ENCODE measurements at regions of chrX and their contacts with region 1.

Region 1: DNA sequence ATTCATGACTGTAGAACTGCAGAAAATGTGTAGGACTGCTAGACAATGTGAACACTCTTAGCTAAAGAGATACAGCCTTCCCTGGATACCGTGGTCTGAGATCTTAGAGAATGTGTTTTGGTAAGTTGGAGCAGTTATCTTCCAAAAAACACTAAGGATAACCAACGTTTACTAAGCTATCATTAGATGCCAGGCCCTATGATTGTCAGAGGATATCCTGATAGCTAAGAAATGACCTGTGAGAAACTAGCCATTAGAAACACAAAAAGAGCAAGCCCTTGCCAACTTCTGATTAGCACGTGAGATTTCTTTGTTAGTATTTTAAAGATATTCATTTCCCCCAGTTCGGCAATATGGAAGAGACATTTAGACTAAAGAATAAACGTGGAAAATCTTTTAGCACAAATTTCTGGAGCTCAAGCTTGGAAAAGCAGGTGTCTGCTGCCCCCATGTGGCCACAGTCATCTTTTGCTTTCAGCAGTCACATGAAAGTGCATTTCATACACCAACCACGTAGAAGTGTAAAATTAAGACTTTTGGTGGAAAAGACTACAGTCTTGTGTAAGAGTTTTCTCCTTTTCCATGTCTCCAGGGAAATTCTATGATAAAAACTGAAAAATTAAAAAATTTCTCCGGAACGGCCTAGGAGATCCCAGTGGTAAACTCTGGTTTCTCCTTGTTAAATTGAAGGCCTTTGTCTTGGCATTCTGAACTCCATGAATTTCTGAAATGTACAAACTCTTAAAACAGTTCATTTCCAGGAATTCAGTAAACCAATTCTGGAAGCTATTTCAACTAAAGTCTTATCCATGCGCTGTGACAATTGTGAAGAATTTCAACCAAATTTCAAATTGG is 136.4 kb downstream of the ZNF674 start:
- DNase-seq: peak; percentile 41 to 65 (median 53)
- ATAC-seq: peak; percentile 55; the same call in 1 of the 3 replicates
- H3K4me3 ChIP-seq: no peak overlapping the region
- H3K27ac ChIP-seq: no peak overlapping the region
- H3K4me1 ChIP-seq: no peaks in the 10 kb centered on the region
- H3K27me3 ChIP-seq: no peaks in the 10 kb centered on the region
- CTCF ChIP-seq: peak; percentile 62 to 76 (median 66)
- EP300 ChIP-seq: no peak
- POLR2A ChIP-seq: no peak
- RAD21 ChIP-seq: peak; percentile 51 to 79

Region 2: DNA sequence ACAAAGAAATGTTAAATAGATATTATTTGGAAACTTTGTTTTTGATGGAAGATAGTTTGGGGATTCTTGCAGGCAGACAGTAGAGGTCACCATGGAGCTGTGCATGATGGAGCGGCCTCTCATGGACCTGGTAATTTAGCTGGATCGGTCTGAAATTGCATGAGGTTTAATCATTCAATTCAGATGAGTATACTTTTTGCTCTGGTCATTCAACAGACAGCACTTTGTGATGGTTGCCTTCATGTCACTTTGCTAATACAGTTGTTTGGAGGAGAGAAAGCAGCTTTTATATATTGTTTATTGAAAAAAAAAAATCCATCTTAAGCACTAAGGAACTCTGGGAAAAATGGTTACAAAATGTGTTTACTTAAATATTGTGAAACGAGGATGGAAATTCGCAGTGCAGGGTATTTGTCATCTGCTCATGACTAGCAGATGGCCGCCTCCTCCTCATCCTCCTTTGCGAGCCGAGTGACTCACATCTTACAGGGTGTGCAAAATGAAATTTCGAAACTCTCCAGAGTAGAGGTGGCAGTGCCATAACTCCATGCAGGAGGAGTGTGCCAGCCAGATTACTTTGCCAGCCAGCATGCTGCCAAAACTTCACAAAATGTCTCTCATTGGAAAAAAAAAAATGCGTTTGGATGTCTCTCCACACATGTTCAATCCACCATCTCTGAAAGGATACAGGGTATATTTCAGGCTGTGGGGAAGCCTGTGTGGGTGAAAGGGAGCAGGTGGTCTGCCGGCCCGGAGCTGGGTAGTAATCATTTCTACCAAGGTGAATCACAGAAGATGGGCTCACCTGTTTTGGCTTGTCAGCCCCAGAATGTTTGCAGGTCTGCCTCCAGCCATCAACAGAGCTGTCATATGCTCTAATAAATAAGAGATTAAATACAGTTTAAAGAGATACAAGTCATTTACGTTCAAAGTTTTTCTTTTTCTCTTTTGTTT is 893.2 kb before region 1 on chrX:
- CTCF ChIA-PET with region 1: no interaction called
- POLR2A ChIA-PET with region 1: no interaction called
- in situ Hi-C with region 1: no loop called
- intact Hi-C with region 1: loop called (anchors 10 kb)
- DNase-seq: peak in 2 of 4 experiments; percentile 5 to 21
- ATAC-seq: peak; percentile 63; the same call in 2 of the 3 replicates
- H3K4me3 ChIP-seq: no peak overlapping the region
- H3K27ac ChIP-seq: no peak overlapping the region
- H3K4me1 ChIP-seq: no peaks in the 10 kb centered on the region
- H3K27me3 ChIP-seq: no peaks in the 10 kb centered on the region
- CTCF ChIP-seq: peak; percentile 37 to 51 (median 49); a peak in 5 of 6 replicates
- EP300 ChIP-seq: no peak
- POLR2A ChIP-seq: no peak
- RAD21 ChIP-seq: peak in 1 of 2 experiments; percentile 57; a peak in 2 of 4 replicates

Region 3: DNA sequence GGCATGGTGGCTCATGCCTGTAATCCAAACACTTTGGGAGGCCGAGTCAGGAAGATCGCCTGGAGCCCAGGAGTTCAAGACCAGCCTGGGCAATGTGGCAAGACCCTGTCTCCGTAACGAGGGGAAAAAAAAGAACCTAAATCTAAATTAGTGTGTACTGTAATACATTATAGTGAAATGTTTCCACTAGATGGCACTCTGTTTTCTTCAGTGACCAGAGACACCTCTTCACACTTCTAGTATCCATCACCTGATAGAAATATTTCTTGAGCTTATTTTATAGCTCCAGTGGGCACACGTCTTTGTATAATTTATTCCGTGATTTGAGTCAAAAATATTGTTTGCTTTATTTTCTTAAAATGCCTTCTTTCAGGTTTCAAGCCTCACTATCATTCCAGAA is 607.2 kb before region 1 on chrX:
- CTCF ChIA-PET with region 1: no interaction called
- POLR2A ChIA-PET with region 1: no interaction called
- in situ Hi-C with region 1: no loop called
- intact Hi-C with region 1: loop called (anchors 5 kb)
- DNase-seq: peak in 1 of 4 experiments; percentile 15
- ATAC-seq: peak; percentile 70; the same call in 2 of the 3 replicates
- H3K4me3 ChIP-seq: no peak overlapping the region
- H3K27ac ChIP-seq: no peak overlapping the region
- H3K4me1 ChIP-seq: no peaks in the 10 kb centered on the region
- H3K27me3 ChIP-seq: no peaks in the 10 kb centered on the region
- CTCF ChIP-seq: peak in 1 of 3 experiments; percentile 37; a peak in 2 of 6 replicates
- EP300 ChIP-seq: no peak
- POLR2A ChIP-seq: no peak
- RAD21 ChIP-seq: peak in 1 of 2 experiments; percentile 32; a peak in 2 of 4 replicates

Region 4: DNA sequence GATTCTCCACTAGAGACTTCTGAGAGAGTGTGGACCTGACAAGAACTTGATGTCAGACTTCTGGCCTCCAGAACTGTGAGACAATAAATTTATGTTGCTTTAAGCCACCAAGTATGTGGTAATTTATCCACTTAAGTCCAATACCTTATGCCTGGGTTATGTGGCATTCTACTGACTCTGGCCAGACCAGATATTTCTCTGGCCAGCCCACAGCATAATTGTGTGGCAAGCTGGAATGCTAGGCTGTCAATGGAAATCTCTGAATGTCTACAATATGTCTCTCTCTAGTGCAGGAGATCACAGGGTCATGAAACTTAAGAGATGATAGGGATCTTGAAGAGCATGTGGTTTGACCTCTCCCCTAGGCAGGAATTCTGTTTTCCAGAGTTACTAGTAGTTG is 114.5 kb before region 1 on chrX:
- CTCF ChIA-PET with region 1: no interaction called
- POLR2A ChIA-PET with region 1: no interaction called
- in situ Hi-C with region 1: no loop called
- intact Hi-C with region 1: no loop called
- DNase-seq: no peak
- ATAC-seq: no peak
- H3K4me3 ChIP-seq: no peak overlapping the region
- H3K27ac ChIP-seq: no peak overlapping the region
- H3K4me1 ChIP-seq: no peaks in the 10 kb centered on the region
- H3K27me3 ChIP-seq: no peaks in the 10 kb centered on the region
- CTCF ChIP-seq: no peak
- EP300 ChIP-seq: no peak
- POLR2A ChIP-seq: no peak
- RAD21 ChIP-seq: no peak

Region 5: GRCh38 chrX:46823491-46823890 is 414.7 kb after region 1 on chrX:
- CTCF ChIA-PET with region 1: no interaction called
- POLR2A ChIA-PET with region 1: no interaction called
- in situ Hi-C with region 1: no loop called
- intact Hi-C with region 1: no loop called
- DNase-seq: no peak
- ATAC-seq: no peak
- H3K4me3 ChIP-seq: no peak overlapping the region
- H3K27ac ChIP-seq: no peak overlapping the region
- H3K4me1 ChIP-seq: no peaks in the 10 kb centered on the region
- H3K27me3 ChIP-seq: no peaks in the 10 kb centered on the region
- CTCF ChIP-seq: no peak
- EP300 ChIP-seq: no peak
- POLR2A ChIP-seq: no peak
- RAD21 ChIP-seq: no peak

Measured in K562 (cell line).